ENCODE measurements at regions of chr11 and their contacts with region 1.

Region 1: GRCh38 chr11:118010738-118011461 is 24.7 kb downstream of the IL10RA start:
- DNase-seq: peak in 3 of 14 experiments; percentile 48 to 76 (median 67)
- ATAC-seq: no peak
- H3K4me3 ChIP-seq: no peak overlapping the region
- H3K4me3 Mint-ChIP-seq: no peak overlapping the region
- H3K27ac ChIP-seq: peak overlapping the region; percentile 9 to 79
- H3K27ac Mint-ChIP-seq: peak overlapping the region; percentile 83
- H3K4me1 ChIP-seq: peaks cover 99% of the 10 kb centered on the region
- H3K4me1 Mint-ChIP-seq: peaks cover 95% of the 10 kb centered on the region
- H3K27me3 ChIP-seq: no peaks in the 10 kb centered on the region
- H3K27me3 Mint-ChIP-seq: no peaks in the 10 kb centered on the region
- CTCF ChIP-seq: no peak

Region 2: DNA sequence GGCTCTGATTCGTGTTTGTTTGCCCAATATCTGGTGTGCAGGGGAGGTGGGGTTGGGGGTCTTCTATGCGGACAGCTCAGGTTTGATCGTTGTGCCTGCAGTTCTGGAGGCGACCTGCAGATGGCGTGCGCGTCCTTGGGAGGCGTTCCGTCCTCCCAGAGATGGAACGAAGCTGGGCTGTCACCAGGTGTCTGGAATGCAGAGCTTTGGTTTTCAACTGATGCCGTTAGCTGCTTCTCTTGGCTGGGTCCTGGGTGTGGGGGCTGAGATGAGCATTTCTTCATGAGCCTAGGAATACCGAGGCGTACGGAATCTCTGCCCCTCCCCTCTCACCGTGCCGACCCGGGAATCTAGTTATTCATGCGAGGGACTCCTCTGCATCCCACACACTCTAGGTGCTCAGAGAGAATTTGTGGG is 584.6 kb before region 1 on chr11:
- CTCF ChIA-PET with region 1: no interaction called
- POLR2A ChIA-PET with region 1: no interaction called
- intact Hi-C with region 1: no loop called
- DNase-seq: peak; percentile 50 to 74 (median 61)
- ATAC-seq: peak; percentile 48
- H3K4me3 ChIP-seq: no peak overlapping the region
- H3K4me3 Mint-ChIP-seq: no peak overlapping the region
- H3K27ac ChIP-seq: no peak overlapping the region
- H3K27ac Mint-ChIP-seq: no peak overlapping the region
- H3K4me1 ChIP-seq: peaks cover 8% of the 10 kb centered on the region
- H3K4me1 Mint-ChIP-seq: peaks cover 5% of the 10 kb centered on the region
- H3K27me3 ChIP-seq: no peaks in the 10 kb centered on the region
- H3K27me3 Mint-ChIP-seq: no peaks in the 10 kb centered on the region
- CTCF ChIP-seq: peak; percentile 92

Region 3: GRCh38 chr11:118027691-118028090 is 16.8 kb after region 1 on chr11:
- CTCF ChIA-PET with region 1: no interaction called
- POLR2A ChIA-PET with region 1: no interaction called
- intact Hi-C with region 1: no loop called
- DNase-seq: no peak
- ATAC-seq: no peak
- H3K4me3 ChIP-seq: no peak overlapping the region
- H3K4me3 Mint-ChIP-seq: no peak overlapping the region
- H3K27ac ChIP-seq: no peak overlapping the region
- H3K27ac Mint-ChIP-seq: no peak overlapping the region
- H3K4me1 ChIP-seq: peaks cover 8% of the 10 kb centered on the region
- H3K4me1 Mint-ChIP-seq: peaks cover 19% of the 10 kb centered on the region
- H3K27me3 ChIP-seq: no peaks in the 10 kb centered on the region
- H3K27me3 Mint-ChIP-seq: no peaks in the 10 kb centered on the region
- CTCF ChIP-seq: no peak

Region 4: GRCh38 chr11:118046051-118046963 is 35.4 kb after region 1 on chr11:
- CTCF ChIA-PET with region 1: no interaction called
- POLR2A ChIA-PET with region 1: interaction called, 132 read pairs
- intact Hi-C with region 1: loop called in 1 of 2 experiments (anchors 5 kb)
- DNase-seq: peak in 11 of 14 experiments; percentile 25 to 84 (median 44)
- ATAC-seq: peak; percentile 83
- H3K4me3 ChIP-seq: no peak overlapping the region
- H3K4me3 Mint-ChIP-seq: peak overlapping the region; percentile 69
- H3K27ac ChIP-seq: peak overlapping the region; percentile 71 to 76
- H3K27ac Mint-ChIP-seq: peak overlapping the region; percentile 95
- H3K4me1 ChIP-seq: peaks cover 80% of the 10 kb centered on the region
- H3K4me1 Mint-ChIP-seq: peaks cover 93% of the 10 kb centered on the region
- H3K27me3 ChIP-seq: no peaks in the 10 kb centered on the region
- H3K27me3 Mint-ChIP-seq: no peaks in the 10 kb centered on the region
- CTCF ChIP-seq: no peak

Region 5: GRCh38 chr11:118109231-118109630 is 98.3 kb after region 1 on chr11:
- CTCF ChIA-PET with region 1: no interaction called
- POLR2A ChIA-PET with region 1: no interaction called
- intact Hi-C with region 1: no loop called
- DNase-seq: no peak
- ATAC-seq: no peak
- H3K4me3 ChIP-seq: no peak overlapping the region
- H3K4me3 Mint-ChIP-seq: no peak overlapping the region
- H3K27ac ChIP-seq: no peak overlapping the region
- H3K27ac Mint-ChIP-seq: no peak overlapping the region
- H3K4me1 ChIP-seq: no peaks in the 10 kb centered on the region
- H3K4me1 Mint-ChIP-seq: no peaks in the 10 kb centered on the region
- H3K27me3 ChIP-seq: no peaks in the 10 kb centered on the region
- H3K27me3 Mint-ChIP-seq: peaks cover 4% of the 10 kb centered on the region
- CTCF ChIP-seq: no peak

Region 6: DNA sequence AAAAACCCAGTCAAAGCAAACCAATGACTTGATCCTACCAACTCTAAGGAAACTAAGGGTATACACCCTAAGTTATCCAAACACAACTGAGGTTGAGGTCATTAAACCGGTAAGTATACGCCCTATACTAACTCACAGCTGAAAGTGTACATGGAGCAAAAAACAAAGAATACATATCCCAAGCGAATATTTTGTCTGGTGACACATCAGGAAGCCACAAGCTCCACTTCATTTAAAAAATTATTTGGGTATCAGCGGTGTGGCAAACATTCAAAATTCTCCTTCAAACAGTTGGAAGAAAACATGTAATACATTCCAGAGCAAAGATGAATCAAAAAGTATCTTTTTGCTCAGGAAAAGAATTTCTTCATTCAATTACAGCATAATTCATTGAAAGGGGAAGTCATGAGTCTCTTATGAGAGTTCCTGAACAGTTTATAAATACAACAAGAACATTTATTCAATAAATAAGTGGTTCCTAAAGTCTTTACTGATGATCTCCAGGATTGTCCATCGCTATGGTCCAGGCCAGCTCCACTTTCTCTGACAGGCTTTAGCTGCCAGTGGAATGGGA is 218.5 kb after region 1 on chr11:
- CTCF ChIA-PET with region 1: no interaction called
- POLR2A ChIA-PET with region 1: no interaction called
- intact Hi-C with region 1: no loop called
- DNase-seq: no peak
- ATAC-seq: no peak
- H3K4me3 ChIP-seq: no peak overlapping the region
- H3K4me3 Mint-ChIP-seq: peak overlapping the region; percentile 79
- H3K27ac ChIP-seq: peak overlapping the region; percentile 31 to 56
- H3K27ac Mint-ChIP-seq: no peak overlapping the region
- H3K4me1 ChIP-seq: peaks cover 60% of the 10 kb centered on the region
- H3K4me1 Mint-ChIP-seq: peaks cover 23% of the 10 kb centered on the region
- H3K27me3 ChIP-seq: no peaks in the 10 kb centered on the region
- H3K27me3 Mint-ChIP-seq: no peaks in the 10 kb centered on the region
- CTCF ChIP-seq: no peak

Measured in CD4-positive, alpha-beta T cell (primary cell).